Activated T-helper 2 cell treated with anti-CD3 and anti-CD28 coated beads, Interferon-gamma antibody, Interleukin-2, Interleukin-4, amounts not matched to agents 10 μg/mL and 5 μg/mL and 100 μg/mL, durations not matched to agents 14 hours and 24 hours and 36 hours (primary cell): ENCODE measurements at regions of chr7 and their contacts with region 1.

Region 1: GRCh38 chr7:1225441-1226185 is 7.1 kb upstream of the UNCX start:
- DNase-seq: no peak
- H3K4me3 Mint-ChIP-seq: no peak overlapping the region
- H3K27ac Mint-ChIP-seq: no peak overlapping the region
- H3K4me1 Mint-ChIP-seq: no peaks in the 10 kb centered on the region
- H3K27me3 Mint-ChIP-seq: peaks cover 55% of the 10 kb centered on the region

Region 2: DNA sequence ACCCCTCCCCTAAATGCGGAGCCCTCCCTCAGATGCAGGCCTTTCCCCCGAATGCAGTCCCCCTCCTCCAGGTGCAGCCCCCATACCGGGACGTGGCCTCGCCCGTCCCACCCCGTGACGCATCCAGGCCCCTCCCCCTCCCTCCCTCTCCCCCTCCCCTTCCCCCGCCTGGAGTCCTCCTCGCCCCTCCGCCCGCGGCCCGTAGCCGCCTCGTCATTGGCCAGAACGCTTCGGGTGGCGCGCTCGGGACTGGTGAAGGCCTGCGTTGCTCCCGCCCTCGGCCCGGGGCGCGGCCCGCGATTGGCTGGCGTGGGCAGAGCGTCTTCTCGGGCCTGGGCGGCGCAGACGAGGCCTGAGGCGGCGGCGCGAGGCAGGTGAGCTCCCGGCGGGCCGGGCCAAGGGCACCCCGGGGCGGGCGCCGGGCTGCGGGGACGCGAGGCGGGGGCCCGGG is 409.3 kb before region 1 on chr7:
- intact Hi-C with region 1: no loop called
- DNase-seq: peak; percentile 95
- H3K4me3 Mint-ChIP-seq: peak overlapping the region; percentile 69
- H3K27ac Mint-ChIP-seq: no peak overlapping the region
- H3K4me1 Mint-ChIP-seq: peaks cover 41% of the 10 kb centered on the region
- H3K27me3 Mint-ChIP-seq: peaks cover 23% of the 10 kb centered on the region

Region 3: DNA sequence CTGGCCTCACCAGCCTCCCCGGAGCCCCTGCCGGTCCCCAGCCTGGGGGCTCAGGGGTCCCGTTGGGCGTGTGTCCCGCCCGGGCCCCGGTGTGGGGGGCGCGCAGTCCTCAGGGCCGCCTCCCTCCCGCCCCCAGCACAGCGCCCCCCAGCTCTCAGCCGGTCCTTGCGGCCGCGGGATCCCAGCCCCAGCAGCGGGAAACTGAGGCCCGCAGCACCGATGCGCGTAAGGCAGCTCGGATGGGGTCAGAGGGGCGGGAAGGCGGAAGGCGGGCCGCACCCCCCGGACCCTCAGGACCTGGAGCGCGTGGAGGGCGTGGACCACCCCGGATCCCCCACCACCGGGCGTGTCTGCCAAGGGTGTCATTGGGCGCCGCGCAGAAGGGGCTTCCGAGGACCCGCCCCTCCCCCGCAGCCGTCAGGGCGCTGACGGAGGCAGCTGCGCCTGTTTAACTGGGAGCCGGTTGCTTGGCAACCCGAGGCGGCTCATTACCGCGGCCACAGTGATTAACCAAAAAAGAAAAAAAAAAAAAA is 22.0 kb after region 1 on chr7:
- intact Hi-C with region 1: loop called (anchors 2 kb)
- DNase-seq: no peak
- H3K4me3 Mint-ChIP-seq: no peak overlapping the region
- H3K27ac Mint-ChIP-seq: no peak overlapping the region
- H3K4me1 Mint-ChIP-seq: no peaks in the 10 kb centered on the region
- H3K27me3 Mint-ChIP-seq: peaks cover 56% of the 10 kb centered on the region

Region 4: DNA sequence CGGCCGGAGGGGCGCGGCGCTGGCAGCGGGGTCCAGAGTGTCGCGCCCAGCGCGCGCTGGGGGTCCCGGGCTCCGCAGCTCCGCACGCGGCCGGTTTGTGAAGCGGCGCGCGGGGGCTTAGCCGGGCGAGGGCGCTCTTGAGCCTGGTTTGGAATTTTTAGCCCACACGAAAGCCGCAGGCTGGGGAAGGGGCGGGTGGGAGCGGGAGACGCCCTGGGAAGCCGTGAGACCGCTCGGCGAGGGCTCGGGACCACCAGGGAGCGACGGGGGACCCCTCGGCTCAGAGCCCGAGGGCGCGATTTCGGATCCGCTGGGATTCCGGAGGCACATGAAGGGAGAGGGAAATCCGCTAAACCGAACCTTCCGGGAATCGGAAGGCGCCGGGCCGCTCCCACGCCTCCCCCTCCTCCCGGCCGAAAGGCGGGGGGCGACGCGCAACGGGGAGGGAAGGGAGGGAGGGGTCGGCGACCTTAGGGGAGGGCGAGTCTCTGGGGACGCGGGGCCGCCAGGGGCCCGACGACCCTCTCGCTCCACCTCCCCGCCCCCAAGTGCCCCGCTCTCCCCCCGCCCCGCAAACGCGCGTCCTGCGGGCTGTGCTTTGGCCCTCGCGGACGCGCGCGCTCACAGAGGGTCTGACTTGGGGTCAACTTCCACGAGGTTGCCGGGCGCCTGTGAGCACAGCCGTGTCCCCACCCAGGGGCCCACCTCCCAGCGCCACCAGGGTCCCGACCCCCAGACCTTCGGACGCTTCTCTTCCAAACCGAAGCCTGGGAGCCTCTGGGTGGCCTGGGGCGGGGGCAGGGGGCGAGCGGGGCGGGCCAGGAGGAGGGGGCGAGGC is 439.3 kb after region 1 on chr7:
- intact Hi-C with region 1: loop called (anchors 5 kb)
- DNase-seq: peak; percentile 31
- H3K4me3 Mint-ChIP-seq: no peak overlapping the region
- H3K27ac Mint-ChIP-seq: no peak overlapping the region
- H3K4me1 Mint-ChIP-seq: no peaks in the 10 kb centered on the region
- H3K27me3 Mint-ChIP-seq: peaks cover 41% of the 10 kb centered on the region